ENCODE measurements at regions of chr1 and their contacts with region 1.

Region 1: GRCh38 chr1:59699227-59699847 is 115.4 kb upstream of the HOOK1 start:
- DNase-seq: peak; percentile 69
- H3K4me3 ChIP-seq: no peak overlapping the region
- H3K27ac ChIP-seq: no peak overlapping the region
- H3K4me1 ChIP-seq: no peaks in the 10 kb centered on the region
- H3K27me3 ChIP-seq: no peaks in the 10 kb centered on the region
- CTCF ChIP-seq: peak; percentile 93

Region 2: GRCh38 chr1:58515794-58516401 is 1183.4 kb before region 1 on chr1:
- CTCF ChIA-PET with region 1: no interaction called
- POLR2A ChIA-PET with region 1: no interaction called
- intact Hi-C with region 1: loop called (anchors 5 kb)
- DNase-seq: peak; percentile 87
- H3K4me3 ChIP-seq: no peak overlapping the region
- H3K27ac ChIP-seq: no peak overlapping the region
- H3K4me1 ChIP-seq: peaks cover 5% of the 10 kb centered on the region
- H3K27me3 ChIP-seq: no peaks in the 10 kb centered on the region
- CTCF ChIP-seq: peak; percentile 76

Region 3: DNA sequence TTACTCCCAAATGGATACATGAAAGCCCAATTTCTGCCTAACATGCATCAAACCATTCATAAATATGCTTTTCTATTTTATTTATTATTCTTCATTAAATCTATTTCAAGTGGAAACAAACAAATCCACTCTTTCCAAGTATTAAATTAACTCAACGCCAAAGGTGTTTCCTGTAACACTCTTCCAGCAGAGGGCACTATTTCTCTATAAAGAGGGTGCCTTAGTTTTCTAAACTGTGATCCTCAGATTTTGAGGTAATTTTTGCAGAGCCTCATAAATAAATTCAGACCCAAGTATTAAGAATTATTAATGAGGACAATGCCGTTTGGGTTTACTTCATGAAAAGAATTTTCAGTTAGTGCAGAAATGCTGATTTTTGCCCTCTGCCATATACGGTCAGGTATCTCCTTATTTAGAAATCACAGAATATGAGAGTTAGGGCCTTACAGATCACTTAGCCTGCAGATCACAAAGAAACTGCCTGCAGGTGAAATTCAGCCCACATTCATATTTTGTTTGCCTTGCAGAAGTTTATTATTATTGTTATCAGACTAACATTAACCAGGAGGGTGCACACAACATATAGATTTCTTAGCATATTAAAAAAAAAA is 959.4 kb before region 1 on chr1:
- CTCF ChIA-PET with region 1: interaction called, 6 read pairs
- POLR2A ChIA-PET with region 1: no interaction called
- intact Hi-C with region 1: loop called (anchors 2 kb)
- DNase-seq: peak; percentile 82
- H3K4me3 ChIP-seq: no peak overlapping the region
- H3K27ac ChIP-seq: no peak overlapping the region
- H3K4me1 ChIP-seq: peaks cover 4% of the 10 kb centered on the region
- H3K27me3 ChIP-seq: no peaks in the 10 kb centered on the region
- CTCF ChIP-seq: peak; percentile 89

Region 4: DNA sequence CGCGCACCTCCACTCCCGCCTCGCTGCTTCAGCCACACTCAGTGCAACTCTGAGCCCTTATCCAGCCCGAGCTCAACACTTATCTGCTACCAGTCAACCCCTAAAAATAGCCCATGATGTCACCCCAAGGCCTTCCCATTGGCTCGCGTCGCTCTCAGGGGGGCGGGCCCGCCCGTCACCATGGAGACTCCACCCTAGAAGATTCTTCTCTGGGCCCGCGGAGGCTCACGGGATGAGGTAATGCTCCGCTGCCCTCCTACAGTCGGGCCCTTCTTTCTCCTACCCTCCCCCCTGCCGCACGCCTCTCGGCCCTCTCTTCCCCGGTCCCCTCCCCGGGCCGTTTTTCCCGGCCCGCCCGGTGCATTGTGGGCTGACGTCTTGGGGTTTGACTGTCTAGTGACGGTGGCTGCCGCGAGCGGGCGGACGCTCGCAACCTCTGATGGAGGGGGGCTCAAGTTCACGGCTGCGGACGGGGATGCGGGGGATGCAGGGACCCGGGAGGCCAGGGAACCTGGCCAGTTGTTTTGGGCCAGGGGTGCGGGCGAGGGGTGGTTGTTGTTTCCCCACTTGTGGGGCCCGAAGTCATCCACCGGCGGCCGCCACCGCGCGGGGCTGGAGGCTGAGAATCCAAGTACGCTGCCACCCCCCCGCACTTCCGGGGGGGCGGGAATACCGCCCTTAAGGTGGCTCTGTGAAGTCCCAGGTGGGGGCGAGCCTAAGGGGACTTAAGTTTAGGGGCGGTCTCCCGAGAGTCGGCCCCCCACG is 915.2 kb before region 1 on chr1 and contains the start of gene JUN:
- CTCF ChIA-PET with region 1: interaction called, 3 read pairs
- POLR2A ChIA-PET with region 1: no interaction called
- intact Hi-C with region 1: loop called (anchors 2 kb)
- DNase-seq: peak; percentile 99
- H3K4me3 ChIP-seq: peak within 1 kb of the TSS; percentile 63
- H3K27ac ChIP-seq: peak within 1 kb of the TSS; percentile 87
- H3K4me1 ChIP-seq: peaks cover 32% of the 10 kb centered on the region
- H3K27me3 ChIP-seq: peaks cover 3% of the 10 kb centered on the region
- CTCF ChIP-seq: no peak
- total RNA-seq, gene JUN: 16.9 and 24.9 TPM in 2 replicates

Region 5: GRCh38 chr1:59071289-59071688 is 628.0 kb before region 1 on chr1:
- CTCF ChIA-PET with region 1: interaction called, 4 read pairs
- POLR2A ChIA-PET with region 1: no interaction called
- intact Hi-C with region 1: loop called (anchors 5 kb)
- DNase-seq: peak; percentile 43
- H3K4me3 ChIP-seq: no peak overlapping the region
- H3K27ac ChIP-seq: no peak overlapping the region
- H3K4me1 ChIP-seq: peaks cover 25% of the 10 kb centered on the region
- H3K27me3 ChIP-seq: no peaks in the 10 kb centered on the region
- CTCF ChIP-seq: no peak

Region 6: GRCh38 chr1:59494145-59494833 is 205.0 kb before region 1 on chr1:
- CTCF ChIA-PET with region 1: no interaction called
- POLR2A ChIA-PET with region 1: no interaction called
- intact Hi-C with region 1: loop called (anchors 5 kb)
- DNase-seq: no peak
- H3K4me3 ChIP-seq: no peak overlapping the region
- H3K27ac ChIP-seq: no peak overlapping the region
- H3K4me1 ChIP-seq: no peaks in the 10 kb centered on the region
- H3K27me3 ChIP-seq: no peaks in the 10 kb centered on the region
- CTCF ChIP-seq: no peak

Measured in A673 (cell line).